ENCODE measurements at regions of chr2 and their contacts with region 1.

Region 1: DNA sequence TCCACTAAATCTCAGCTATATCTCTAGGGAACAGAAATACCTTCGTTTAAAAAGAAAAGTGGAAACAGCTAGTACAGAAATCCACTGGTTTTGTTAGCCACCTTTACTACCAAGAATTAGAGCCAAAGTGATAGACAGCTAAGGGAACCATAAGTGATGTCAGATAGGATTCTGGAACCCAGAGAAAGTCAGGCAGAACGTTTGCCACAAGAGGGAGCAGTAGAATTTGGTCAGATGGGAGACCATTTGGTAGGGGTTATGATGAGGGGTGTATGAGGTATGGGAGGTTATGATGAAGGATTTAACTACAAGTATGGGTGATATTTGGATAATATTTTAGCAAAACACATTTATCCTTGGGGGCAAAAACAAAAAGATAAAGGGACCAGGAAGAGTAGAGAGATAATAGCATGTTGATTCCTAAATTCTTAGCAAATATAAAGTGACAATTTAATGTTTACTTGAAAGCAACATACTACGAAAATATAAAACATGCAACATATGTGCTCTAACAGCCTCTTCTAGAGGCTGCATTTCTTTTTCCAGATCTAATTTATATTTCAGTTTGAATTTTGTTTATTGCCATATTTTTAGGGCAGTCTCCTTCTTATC is 3.3 kb downstream of the SLC8A1 start:
- DNase-seq: no peak
- H3K4me3 Mint-ChIP-seq: no peak overlapping the region
- H3K27ac Mint-ChIP-seq: no peak overlapping the region
- H3K4me1 Mint-ChIP-seq: peaks cover 25% of the 10 kb centered on the region
- H3K27me3 Mint-ChIP-seq: peaks cover 38% of the 10 kb centered on the region

Region 2: GRCh38 chr2:40244675-40245074 is 203.9 kb before region 1 on chr2:
- intact Hi-C with region 1: loop called (anchors 10 kb)
- DNase-seq: no peak
- H3K4me3 Mint-ChIP-seq: no peak overlapping the region
- H3K27ac Mint-ChIP-seq: no peak overlapping the region
- H3K4me1 Mint-ChIP-seq: peaks cover 8% of the 10 kb centered on the region
- H3K27me3 Mint-ChIP-seq: no peaks in the 10 kb centered on the region

Region 3: GRCh38 chr2:40734797-40735196 is 286.2 kb after region 1 on chr2:
- intact Hi-C with region 1: no loop called
- DNase-seq: no peak
- H3K4me3 Mint-ChIP-seq: no peak overlapping the region
- H3K27ac Mint-ChIP-seq: no peak overlapping the region
- H3K4me1 Mint-ChIP-seq: no peaks in the 10 kb centered on the region
- H3K27me3 Mint-ChIP-seq: no peaks in the 10 kb centered on the region

Measured in activated T-helper 2 cell treated with anti-CD3 and anti-CD28 coated beads, Interferon-gamma antibody, Interleukin-2, Interleukin-4, amounts not matched to agents 10 μg/mL and 5 μg/mL and 100 μg/mL, durations not matched to agents 14 hours and 24 hours and 36 hours (primary cell).